CD4-positive, alpha-beta memory T cell (primary cell): ENCODE measurements at regions of chr10 and their contacts with region 1.

Region 1: DNA sequence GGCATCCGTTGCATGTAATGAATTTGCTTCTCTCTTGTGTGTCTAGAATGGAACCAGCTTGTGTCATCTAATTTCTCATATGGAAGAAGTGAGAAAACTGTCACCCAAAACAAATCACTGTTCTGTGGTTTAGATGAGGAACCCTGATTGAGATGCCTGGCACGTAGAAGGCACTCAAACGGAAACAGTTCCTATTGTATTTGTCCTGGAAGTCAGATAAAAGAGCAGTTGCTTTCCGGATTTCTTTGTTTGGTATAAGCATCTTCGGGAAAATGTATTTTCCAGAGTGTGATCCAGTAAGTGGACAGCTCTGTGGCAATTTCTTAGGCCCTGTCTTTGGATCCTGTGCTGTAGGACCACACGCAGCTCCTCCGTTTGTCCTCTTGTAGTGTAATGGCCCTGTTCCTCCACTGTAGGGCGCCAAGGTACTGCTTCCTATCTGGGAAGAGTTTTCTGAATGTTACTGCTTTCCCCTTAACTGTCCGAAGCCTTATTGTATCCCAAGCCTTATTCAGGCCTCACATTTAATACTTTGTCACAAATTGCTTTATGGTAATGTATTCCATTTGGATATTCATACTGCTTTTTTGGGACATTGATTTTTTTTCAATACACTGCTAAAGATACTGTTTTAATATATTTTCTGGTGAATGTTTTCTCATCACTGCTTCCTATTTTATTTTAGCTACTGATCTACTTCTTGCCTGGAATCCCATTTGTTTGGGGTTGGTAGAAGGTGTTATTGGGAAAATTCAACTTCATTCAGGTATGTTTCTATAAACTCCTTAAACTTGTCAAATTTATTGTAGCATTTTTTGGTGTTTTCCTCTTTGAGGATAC is 24.8 kb downstream of the INPP5F start:
- DNase-seq: peak; percentile 41 to 54 (median 48)
- H3K4me3 ChIP-seq: no peak overlapping the region
- H3K4me3 Mint-ChIP-seq: peak overlapping the region in 3 of 8 donors; percentile 20 to 38 (median 20)
- H3K27ac ChIP-seq: no peak overlapping the region
- H3K27ac Mint-ChIP-seq: peak overlapping the region in 2 of 7 donors; percentile 54 to 83
- H3K4me1 ChIP-seq: peaks cover 5% of the 10 kb centered on the region
- H3K4me1 Mint-ChIP-seq: peaks cover 7 to 11% (median 10%) of the 10 kb centered on the region in 4 donors
- H3K27me3 ChIP-seq: no peaks in the 10 kb centered on the region
- H3K27me3 Mint-ChIP-seq: no peaks in the 10 kb centered on the region

Region 2: GRCh38 chr10:119686439-119687191 is 64.0 kb before region 1 on chr10:
- CTCF ChIA-PET with region 1: interaction called, 6 read pairs
- POLR2A ChIA-PET with region 1: interaction called, 4 read pairs
- intact Hi-C with region 1: loop called (anchors 1 kb)
- DNase-seq: peak; percentile 76 to 85 (median 78)
- H3K4me3 ChIP-seq: peak overlapping the region in 1 of 2 donors; percentile 60
- H3K4me3 Mint-ChIP-seq: peak overlapping the region; percentile 70 to 84 (median 79)
- H3K27ac ChIP-seq: no peak overlapping the region
- H3K27ac Mint-ChIP-seq: peak overlapping the region; percentile 51 to 84 (median 77)
- H3K4me1 ChIP-seq: peaks cover 19% of the 10 kb centered on the region
- H3K4me1 Mint-ChIP-seq: peaks cover 7 to 22% (median 16%) of the 10 kb centered on the region in 4 donors
- H3K27me3 ChIP-seq: no peaks in the 10 kb centered on the region
- H3K27me3 Mint-ChIP-seq: peaks cover 1% of the 10 kb centered on the region in 2 donors

Region 3: GRCh38 chr10:119761106-119761505 is 10.5 kb after region 1 on chr10:
- CTCF ChIA-PET with region 1: interaction called, 25 read pairs
- POLR2A ChIA-PET with region 1: no interaction called
- intact Hi-C with region 1: loop called (anchors 1 kb)
- DNase-seq: no peak
- H3K4me3 ChIP-seq: no peak overlapping the region
- H3K4me3 Mint-ChIP-seq: no peak overlapping the region
- H3K27ac ChIP-seq: no peak overlapping the region
- H3K27ac Mint-ChIP-seq: no peak overlapping the region
- H3K4me1 ChIP-seq: no peaks in the 10 kb centered on the region
- H3K4me1 Mint-ChIP-seq: peaks cover 0 to 5% (median 0%) of the 10 kb centered on the region in 4 donors
- H3K27me3 ChIP-seq: no peaks in the 10 kb centered on the region
- H3K27me3 Mint-ChIP-seq: no peaks in the 10 kb centered on the region

Region 4: GRCh38 chr10:119859420-119860258 is 109.0 kb after region 1 on chr10:
- CTCF ChIA-PET with region 1: interaction called, 74 read pairs
- POLR2A ChIA-PET with region 1: interaction called, 3 read pairs
- intact Hi-C with region 1: loop called (anchors 1 kb)
- DNase-seq: peak in 4 of 5 donors; percentile 45 to 52 (median 50)
- H3K4me3 ChIP-seq: no peak overlapping the region
- H3K4me3 Mint-ChIP-seq: no peak overlapping the region
- H3K27ac ChIP-seq: no peak overlapping the region
- H3K27ac Mint-ChIP-seq: peak overlapping the region in 6 of 7 donors; percentile 12 to 74 (median 24)
- H3K4me1 ChIP-seq: peaks cover 36% of the 10 kb centered on the region
- H3K4me1 Mint-ChIP-seq: peaks cover 26 to 50% (median 39%) of the 10 kb centered on the region in 4 donors
- H3K27me3 ChIP-seq: no peaks in the 10 kb centered on the region
- H3K27me3 Mint-ChIP-seq: no peaks in the 10 kb centered on the region

Region 5: GRCh38 chr10:120011359-120012130 is 260.9 kb after region 1 on chr10:
- CTCF ChIA-PET with region 1: no interaction called
- POLR2A ChIA-PET with region 1: no interaction called
- intact Hi-C with region 1: no loop called
- DNase-seq: no peak
- H3K4me3 ChIP-seq: no peak overlapping the region
- H3K4me3 Mint-ChIP-seq: no peak overlapping the region
- H3K27ac ChIP-seq: no peak overlapping the region
- H3K27ac Mint-ChIP-seq: no peak overlapping the region
- H3K4me1 ChIP-seq: no peaks in the 10 kb centered on the region
- H3K4me1 Mint-ChIP-seq: no peaks in the 10 kb centered on the region
- H3K27me3 ChIP-seq: no peaks in the 10 kb centered on the region
- H3K27me3 Mint-ChIP-seq: peaks cover 22 to 26% of the 10 kb centered on the region in 2 donors

Region 6: GRCh38 chr10:120735773-120736371 is 985.3 kb after region 1 on chr10:
- CTCF ChIA-PET with region 1: interaction called, 3 read pairs
- POLR2A ChIA-PET with region 1: no interaction called
- intact Hi-C with region 1: loop called (anchors 10 kb)
- DNase-seq: peak in 1 of 5 donors; percentile 4
- H3K4me3 ChIP-seq: no peak overlapping the region
- H3K4me3 Mint-ChIP-seq: no peak overlapping the region
- H3K27ac ChIP-seq: no peak overlapping the region
- H3K27ac Mint-ChIP-seq: no peak overlapping the region
- H3K4me1 ChIP-seq: no peaks in the 10 kb centered on the region
- H3K4me1 Mint-ChIP-seq: no peaks in the 10 kb centered on the region
- H3K27me3 ChIP-seq: no peaks in the 10 kb centered on the region
- H3K27me3 Mint-ChIP-seq: peaks cover 0 to 3% of the 10 kb centered on the region in 2 donors